ENCODE measurements at regions of chr19 and their contacts with region 1.

Region 1: GRCh38 chr19:33235269-33235995 is 9.8 kb upstream of the SLC7A10 start:
- DNase-seq: peak; percentile 61 to 79
- H3K4me3 ChIP-seq: no peak overlapping the region
- H3K27ac ChIP-seq: no peak overlapping the region
- H3K4me1 ChIP-seq: no peaks in the 10 kb centered on the region
- H3K27me3 ChIP-seq: peaks cover 21% of the 10 kb centered on the region
- CTCF ChIP-seq: peak; percentile 94

Region 2: GRCh38 chr19:33143897-33144405 is 91.5 kb before region 1 on chr19:
- CTCF ChIA-PET with region 1: no interaction called
- POLR2A ChIA-PET with region 1: no interaction called
- intact Hi-C with region 1: loop called (anchors 1 kb)
- DNase-seq: peak in 1 of 2 experiments; percentile 48
- H3K4me3 ChIP-seq: no peak overlapping the region
- H3K27ac ChIP-seq: no peak overlapping the region
- H3K4me1 ChIP-seq: no peaks in the 10 kb centered on the region
- H3K27me3 ChIP-seq: no peaks in the 10 kb centered on the region
- CTCF ChIP-seq: peak; percentile 94

Region 3: GRCh38 chr19:33248954-33249613 is 13.7 kb after region 1 on chr19:
- CTCF ChIA-PET with region 1: no interaction called
- POLR2A ChIA-PET with region 1: no interaction called
- intact Hi-C with region 1: no loop called
- DNase-seq: peak; percentile 61
- H3K4me3 ChIP-seq: peak overlapping the region; percentile 27; the same call in 1 of the 2 replicates
- H3K27ac ChIP-seq: no peak overlapping the region
- H3K4me1 ChIP-seq: peaks cover 8% of the 10 kb centered on the region; the same call in 1 of the 2 replicates
- H3K27me3 ChIP-seq: no peaks in the 10 kb centered on the region
- CTCF ChIP-seq: no peak